Activated CD4-positive, alpha-beta memory T cell treated with anti-CD3 and anti-CD28 coated beads for 36 hours (primary cell): ENCODE measurements at regions of chr15 and their contacts with region 1.

Region 1: DNA sequence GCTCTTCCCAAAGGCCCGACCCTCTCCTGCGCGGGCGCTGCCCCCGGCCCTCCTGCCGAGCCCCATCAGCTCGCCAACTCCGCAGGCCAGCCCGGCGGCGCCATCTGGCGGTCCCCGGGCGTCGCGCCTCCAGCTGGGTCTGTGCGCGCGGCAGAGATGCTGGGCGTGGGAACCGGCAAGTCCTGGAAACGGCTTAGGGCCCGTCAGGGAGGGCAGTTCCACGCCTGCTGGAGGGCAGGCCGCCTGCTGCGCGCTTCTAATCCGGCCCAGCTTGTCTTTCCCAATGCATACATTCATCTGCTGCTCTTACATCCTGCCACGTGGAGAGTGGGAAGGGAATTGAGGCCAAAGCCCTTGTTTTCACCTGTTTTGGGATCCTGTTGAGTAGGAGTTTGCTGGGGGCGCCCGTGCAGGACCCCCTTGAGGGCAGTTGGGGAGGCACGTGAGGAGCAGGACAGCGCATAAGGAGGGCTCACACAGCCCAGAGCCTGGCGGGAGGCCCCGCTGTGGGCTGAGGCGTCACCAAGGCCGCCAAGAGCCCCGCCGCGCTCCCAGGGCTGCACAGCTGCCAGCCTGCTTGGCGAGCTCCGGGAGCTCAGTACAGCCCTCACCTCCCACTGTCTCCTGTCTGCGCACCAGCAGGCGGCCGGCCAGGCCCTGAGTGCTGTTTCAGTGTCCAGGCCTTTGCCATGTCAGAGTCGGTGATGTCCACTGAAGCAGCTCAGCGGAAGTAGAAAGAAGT is 165.6 kb downstream of the NSMCE3 start:
- DNase-seq: peak; percentile 70
- H3K4me3 Mint-ChIP-seq: no peak overlapping the region
- H3K27ac Mint-ChIP-seq: no peak overlapping the region
- H3K4me1 Mint-ChIP-seq: no peaks in the 10 kb centered on the region
- H3K27me3 Mint-ChIP-seq: no peaks in the 10 kb centered on the region

Region 2: GRCh38 chr15:29081781-29082180 is 22.2 kb before region 1 on chr15:
- CTCF ChIA-PET with region 1: interaction called, 17 read pairs
- POLR2A ChIA-PET with region 1: no interaction called
- intact Hi-C with region 1: no loop called
- DNase-seq: no peak
- H3K4me3 Mint-ChIP-seq: no peak overlapping the region
- H3K27ac Mint-ChIP-seq: no peak overlapping the region
- H3K4me1 Mint-ChIP-seq: peaks cover 1% of the 10 kb centered on the region
- H3K27me3 Mint-ChIP-seq: no peaks in the 10 kb centered on the region

Region 3: GRCh38 chr15:29115093-29115991 is 11.3 kb after region 1 on chr15:
- CTCF ChIA-PET with region 1: interaction called, 15 read pairs
- POLR2A ChIA-PET with region 1: no interaction called
- intact Hi-C with region 1: no loop called
- DNase-seq: no peak
- H3K4me3 Mint-ChIP-seq: no peak overlapping the region
- H3K27ac Mint-ChIP-seq: no peak overlapping the region
- H3K4me1 Mint-ChIP-seq: peaks cover 10% of the 10 kb centered on the region
- H3K27me3 Mint-ChIP-seq: peaks cover 3% of the 10 kb centered on the region